Activated CD4-positive, alpha-beta T cell treated with anti-CD3 and anti-CD28 coated beads for 36 hours (primary cell): ENCODE measurements at regions of chr3 and their contacts with region 1.

Region 1: GRCh38 chr3:98140531-98140930 is 6.7 kb upstream of the OR5H14 start:
- DNase-seq: no peak
- ATAC-seq: no peak
- H3K4me3 Mint-ChIP-seq: no peak overlapping the region
- H3K27ac Mint-ChIP-seq: no peak overlapping the region
- H3K4me1 Mint-ChIP-seq: no peaks in the 10 kb centered on the region
- H3K27me3 Mint-ChIP-seq: peaks cover 7% of the 10 kb centered on the region

Region 2: GRCh38 chr3:97910931-97911351 is 229.6 kb before region 1 on chr3:
- CTCF ChIA-PET with region 1: no interaction called
- POLR2A ChIA-PET with region 1: no interaction called
- intact Hi-C with region 1: no loop called
- DNase-seq: no peak
- ATAC-seq: peak; percentile 36
- H3K4me3 Mint-ChIP-seq: peak overlapping the region; percentile 46
- H3K27ac Mint-ChIP-seq: peak overlapping the region; percentile 72
- H3K4me1 Mint-ChIP-seq: peaks cover 30% of the 10 kb centered on the region
- H3K27me3 Mint-ChIP-seq: no peaks in the 10 kb centered on the region

Region 3: DNA sequence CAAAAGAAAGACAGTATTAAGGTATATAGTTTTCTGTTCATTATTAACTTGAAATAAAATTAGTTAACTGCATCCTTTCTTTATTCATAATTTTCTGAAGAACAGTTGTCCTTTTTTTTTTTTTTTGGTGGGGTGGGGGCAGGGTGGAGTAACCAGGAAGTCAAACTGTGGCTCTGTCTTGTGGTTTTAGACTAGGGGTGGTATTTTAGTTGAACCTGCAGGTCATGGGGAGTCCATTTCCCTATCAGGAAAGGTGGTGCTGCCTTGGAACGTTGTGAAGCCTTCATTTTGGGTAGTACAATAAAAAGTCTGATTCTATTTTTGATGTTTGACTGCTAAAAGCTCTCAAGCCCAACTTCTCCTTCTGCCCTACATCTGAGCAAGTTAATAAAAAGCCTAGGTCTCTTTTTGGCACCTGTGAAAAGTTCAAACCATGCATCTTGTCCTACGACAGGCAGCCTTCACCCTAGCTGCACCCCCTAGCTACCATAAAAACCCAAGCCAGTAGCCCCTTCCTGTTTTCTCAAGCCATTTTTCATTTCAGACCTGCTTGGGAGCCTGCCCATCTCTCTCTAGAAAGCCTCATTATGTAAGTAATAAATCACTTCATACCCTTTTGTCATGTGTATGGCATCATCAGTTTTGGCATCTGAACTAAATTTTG is 137.1 kb before region 1 on chr3:
- CTCF ChIA-PET with region 1: no interaction called
- POLR2A ChIA-PET with region 1: no interaction called
- intact Hi-C with region 1: no loop called
- DNase-seq: no peak
- ATAC-seq: no peak
- H3K4me3 Mint-ChIP-seq: no peak overlapping the region
- H3K27ac Mint-ChIP-seq: peak overlapping the region; percentile 13
- H3K4me1 Mint-ChIP-seq: peaks cover 21% of the 10 kb centered on the region
- H3K27me3 Mint-ChIP-seq: no peaks in the 10 kb centered on the region

Region 4: GRCh38 chr3:98108162-98108561 is 32.4 kb before region 1 on chr3:
- CTCF ChIA-PET with region 1: no interaction called
- POLR2A ChIA-PET with region 1: no interaction called
- intact Hi-C with region 1: no loop called
- DNase-seq: no peak
- ATAC-seq: no peak
- H3K4me3 Mint-ChIP-seq: no peak overlapping the region
- H3K27ac Mint-ChIP-seq: no peak overlapping the region
- H3K4me1 Mint-ChIP-seq: no peaks in the 10 kb centered on the region
- H3K27me3 Mint-ChIP-seq: peaks cover 3% of the 10 kb centered on the region

Region 5: DNA sequence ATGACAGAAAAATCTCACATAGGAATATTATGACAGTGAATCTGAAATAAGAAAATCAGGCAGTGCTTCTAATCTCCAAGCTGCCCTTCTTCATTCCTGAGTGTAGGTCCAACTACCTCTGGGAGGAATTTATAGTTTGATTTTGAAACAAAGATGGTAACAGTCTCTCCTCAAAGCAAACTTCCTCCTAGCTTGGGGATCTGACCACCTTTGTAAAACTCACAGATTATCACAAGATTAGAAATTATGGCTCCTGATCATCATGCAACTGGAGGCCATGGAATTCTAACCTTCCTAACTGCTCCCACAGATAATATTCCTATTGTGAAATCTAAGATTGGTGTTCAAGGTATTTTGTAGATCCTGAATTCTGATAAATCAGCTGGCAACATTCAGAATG is 14.2 kb after region 1 on chr3:
- CTCF ChIA-PET with region 1: no interaction called
- POLR2A ChIA-PET with region 1: no interaction called
- intact Hi-C with region 1: no loop called
- DNase-seq: no peak
- ATAC-seq: no peak
- H3K4me3 Mint-ChIP-seq: no peak overlapping the region
- H3K27ac Mint-ChIP-seq: no peak overlapping the region
- H3K4me1 Mint-ChIP-seq: no peaks in the 10 kb centered on the region
- H3K27me3 Mint-ChIP-seq: peaks cover 6% of the 10 kb centered on the region

Region 6: GRCh38 chr3:98182196-98182595 is 41.7 kb after region 1 on chr3:
- CTCF ChIA-PET with region 1: no interaction called
- POLR2A ChIA-PET with region 1: no interaction called
- intact Hi-C with region 1: loop called in 1 of 2 experiments (anchors 2 kb)
- DNase-seq: no peak
- ATAC-seq: no peak
- H3K4me3 Mint-ChIP-seq: no peak overlapping the region
- H3K27ac Mint-ChIP-seq: no peak overlapping the region
- H3K4me1 Mint-ChIP-seq: no peaks in the 10 kb centered on the region
- H3K27me3 Mint-ChIP-seq: no peaks in the 10 kb centered on the region